ENCODE measurements at regions of chr10 and their contacts with region 1.

Region 1: DNA sequence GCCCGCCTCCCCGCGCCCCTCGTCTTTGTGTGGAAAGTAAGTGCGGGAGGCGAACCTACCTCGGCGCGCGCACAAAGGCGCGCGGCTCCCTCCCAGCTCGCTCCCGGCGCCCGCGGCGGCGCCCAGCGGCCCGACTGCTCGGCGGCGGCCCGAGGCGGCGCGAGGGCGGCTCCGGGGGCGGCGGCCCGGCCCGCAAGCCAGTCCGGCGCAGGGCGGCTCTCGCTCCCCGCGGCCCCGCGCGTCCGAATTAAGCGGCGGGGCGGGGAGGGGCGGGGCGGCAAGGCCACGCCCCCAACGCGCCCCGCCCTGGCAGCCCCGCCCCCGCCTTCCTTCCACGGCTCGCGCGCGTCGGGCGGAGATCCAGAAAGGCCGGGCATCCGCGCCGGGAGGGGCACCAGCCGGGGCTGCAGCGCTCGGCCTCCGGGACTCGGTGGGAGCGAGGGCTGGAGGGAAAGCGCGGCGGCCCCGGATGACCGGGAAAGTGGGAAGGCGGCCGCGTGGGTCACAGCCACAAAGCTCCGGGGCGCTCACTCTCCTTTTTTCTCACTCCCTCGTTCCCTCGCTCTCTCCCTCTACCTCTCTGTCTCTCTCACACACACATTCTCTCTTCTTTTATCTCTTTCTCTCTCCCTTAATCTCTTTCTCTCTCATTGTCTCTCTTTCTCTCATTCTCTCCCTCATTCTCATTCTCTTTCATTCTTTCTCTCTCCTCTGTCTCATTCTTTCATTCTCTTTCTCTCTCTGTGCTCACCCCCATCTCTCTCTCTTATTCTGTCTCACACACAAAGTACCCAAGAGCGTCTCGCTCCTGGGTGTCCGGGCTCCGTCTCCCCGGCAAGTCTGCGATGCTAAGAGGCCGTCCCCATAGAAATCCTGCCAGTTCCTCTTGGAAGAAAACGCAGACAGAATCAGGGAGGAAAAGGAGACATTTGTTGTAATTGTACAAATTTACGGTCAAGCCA is 170.2 kb downstream of the FAM107B start:
- DNase-seq: peak; percentile 22 to 90
- H3K4me3 ChIP-seq: peak overlapping the region; percentile 78 to 90
- H3K27ac ChIP-seq: peak overlapping the region; percentile 69 to 79
- H3K4me1 ChIP-seq: peaks cover 0 to 12% of the 10 kb centered on the region in 2 donors
- H3K27me3 ChIP-seq: no peaks in the 10 kb centered on the region
- CTCF ChIP-seq: no peak

Region 2: DNA sequence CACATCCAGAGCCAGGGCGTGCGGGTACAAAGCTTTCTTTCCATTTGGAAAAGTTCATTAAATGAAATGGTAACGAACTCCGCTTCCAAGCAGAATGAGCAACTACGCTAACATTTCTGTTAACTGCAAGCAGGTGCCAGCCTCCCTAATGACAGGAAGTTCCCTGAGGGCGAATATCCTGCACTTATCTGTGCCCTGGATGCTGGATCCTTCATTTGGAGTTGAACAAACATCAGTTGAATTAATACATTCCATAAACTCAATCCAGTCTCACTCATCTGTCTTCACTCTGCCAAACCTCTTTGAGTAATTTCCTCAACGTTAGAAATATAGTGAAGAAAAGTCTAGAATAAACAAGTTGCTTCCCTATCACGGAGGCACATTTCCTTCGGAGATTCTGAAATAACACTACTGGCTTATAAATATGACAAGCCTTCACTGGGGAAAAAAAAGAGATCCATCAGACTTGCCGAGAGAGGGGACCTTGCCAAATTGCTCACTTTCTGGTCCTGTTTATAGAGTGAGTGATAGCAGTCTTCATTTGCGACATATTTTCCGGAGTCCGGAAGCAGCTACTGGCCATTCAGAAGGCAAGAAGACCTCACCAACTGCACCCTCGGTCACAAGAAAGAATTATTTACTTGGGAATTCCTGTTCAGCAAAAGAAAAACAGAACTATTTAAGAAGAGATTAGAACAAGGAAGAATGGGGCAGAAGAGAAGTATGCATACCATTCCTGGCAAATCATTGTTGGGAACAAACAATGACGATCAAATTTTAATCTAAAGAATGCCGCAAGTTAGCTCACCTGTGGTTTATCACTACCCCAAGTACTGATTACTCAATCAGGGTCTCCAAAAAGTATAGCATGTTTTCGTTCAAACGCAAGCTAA is 26.2 kb before region 1 on chr10:
- intact Hi-C with region 1: loop called (anchors 2 kb)
- DNase-seq: peak in 1 of 2 donors; percentile 83
- H3K4me3 ChIP-seq: peak overlapping the region; percentile 12 to 30
- H3K27ac ChIP-seq: peak overlapping the region; percentile 39 to 58
- H3K4me1 ChIP-seq: peaks cover 0 to 13% of the 10 kb centered on the region in 2 donors
- H3K27me3 ChIP-seq: no peaks in the 10 kb centered on the region
- CTCF ChIP-seq: no peak

Region 3: DNA sequence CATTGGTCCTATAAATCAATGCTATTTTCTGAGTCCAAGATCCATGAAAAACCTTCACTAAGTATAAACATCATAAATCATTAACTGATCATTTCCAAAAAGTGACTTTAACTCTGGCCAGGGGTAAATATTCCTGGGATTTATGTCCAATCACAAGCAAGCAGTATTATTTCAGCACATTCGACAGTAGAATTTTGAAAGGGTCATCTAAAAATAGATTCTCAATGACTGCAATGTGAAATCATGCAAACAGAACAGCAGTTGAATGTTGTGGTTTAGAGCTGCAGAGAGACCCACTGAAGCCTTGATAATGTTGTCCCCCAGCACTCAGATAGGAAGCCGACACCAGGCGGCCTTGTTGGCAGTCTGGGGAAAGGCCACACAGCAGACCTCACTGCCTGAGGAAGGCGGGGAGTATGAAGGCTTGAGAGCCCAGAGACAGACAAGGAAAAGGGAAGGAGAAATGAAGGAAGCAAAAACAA is 132.2 kb after region 1 on chr10:
- intact Hi-C with region 1: loop called (anchors 5 kb)
- DNase-seq: no peak
- H3K4me3 ChIP-seq: no peak overlapping the region
- H3K27ac ChIP-seq: peak overlapping the region; percentile 82 to 87
- H3K4me1 ChIP-seq: peaks cover 13 to 38% of the 10 kb centered on the region in 2 donors
- H3K27me3 ChIP-seq: no peaks in the 10 kb centered on the region
- CTCF ChIP-seq: no peak

Region 4: GRCh38 chr10:14878266-14879054 is 274.0 kb after region 1 on chr10 and contains the start of gene SUV39H2:
- intact Hi-C with region 1: loop called (anchors 2 kb)
- DNase-seq: peak; percentile 86 to 97
- H3K4me3 ChIP-seq: peak within 1 kb of the TSS; percentile 79 to 92
- H3K27ac ChIP-seq: peak within 1 kb of the TSS; percentile 85 to 92
- H3K4me1 ChIP-seq: peaks cover 0 to 4% of the 10 kb centered on the region in 2 donors
- H3K27me3 ChIP-seq: no peaks in the 10 kb centered on the region
- CTCF ChIP-seq: no peak
- total RNA-seq, gene SUV39H2: not detected

Measured in ascending aorta (tissue), 2 donors.